ENCODE measurements at regions of chr6 and their contacts with region 1.

Region 1: DNA sequence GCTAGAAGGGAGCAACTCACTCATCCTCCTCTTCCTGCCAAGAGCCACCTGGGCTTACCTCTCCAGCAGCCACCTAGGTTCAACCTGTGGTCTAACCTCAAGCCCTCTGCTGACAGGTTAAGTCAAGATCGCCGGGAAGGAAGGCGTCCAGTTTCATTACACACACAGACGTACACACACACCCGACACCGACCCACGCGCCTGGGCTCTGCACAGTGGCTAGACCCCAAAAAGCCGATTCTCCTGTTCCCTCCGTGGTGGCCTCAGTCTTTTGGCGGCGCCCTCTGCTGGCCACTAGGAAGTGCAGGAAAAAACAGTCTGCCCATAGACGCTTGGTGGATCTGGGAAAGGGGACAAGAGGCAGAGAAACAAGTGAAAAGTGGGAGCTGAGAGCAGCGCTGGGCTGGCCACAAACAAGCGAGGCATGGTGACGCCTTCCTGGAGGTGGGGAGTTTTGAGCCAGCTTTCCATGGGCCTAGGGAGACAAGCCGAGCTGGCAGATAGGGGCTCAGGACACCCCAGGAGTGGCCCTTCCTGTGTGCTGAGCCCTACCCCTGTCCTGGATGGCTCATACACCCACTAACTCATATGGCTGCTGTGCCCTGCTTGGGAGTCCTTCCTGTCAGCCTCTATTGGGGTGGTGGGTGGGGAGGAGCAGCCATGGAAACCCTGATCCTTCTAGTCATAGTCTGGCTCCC is 52.7 kb downstream of the MRPL14 start:
- DNase-seq: peak; percentile 64
- ATAC-seq: peak; percentile 51
- H3K4me3 Mint-ChIP-seq: peak overlapping the region; percentile 77
- H3K27ac Mint-ChIP-seq: peak overlapping the region; percentile 31; the same call in 1 of the 2 replicates
- H3K4me1 Mint-ChIP-seq: peaks cover 45% of the 10 kb centered on the region
- H3K27me3 Mint-ChIP-seq: no peaks in the 10 kb centered on the region; the same call in 1 of the 2 replicates
- CTCF ChIP-seq: peak; percentile 85; the same call in 1 of the 2 replicates

Region 2: DNA sequence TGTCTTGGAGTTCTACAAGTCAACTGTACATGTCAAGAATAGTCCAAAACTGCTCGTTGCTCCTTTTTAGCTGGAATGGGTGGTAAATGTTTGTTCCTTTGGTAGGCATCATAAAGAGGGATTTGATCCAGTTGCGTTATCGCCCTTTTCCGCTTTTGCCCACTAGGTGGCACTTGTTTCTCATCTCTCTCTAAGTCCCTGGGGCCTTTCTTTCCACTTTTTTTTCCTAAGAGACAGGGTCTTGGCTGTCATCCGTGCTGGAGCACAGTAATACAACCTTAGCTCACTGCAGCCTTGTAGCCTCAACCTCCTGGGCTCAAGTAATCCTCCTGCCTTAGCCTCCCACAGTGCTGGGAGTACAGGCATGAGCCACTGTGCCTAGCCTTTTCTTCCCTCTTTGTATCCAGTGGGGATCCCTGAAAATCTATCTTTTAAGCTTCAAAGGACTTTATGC is 466.3 kb before region 1 on chr6:
- CTCF ChIA-PET with region 1: interaction called, 12 read pairs
- POLR2A ChIA-PET with region 1: no interaction called
- DNase-seq: peak; percentile 79
- ATAC-seq: peak; percentile 84
- H3K4me3 Mint-ChIP-seq: no peak overlapping the region
- H3K27ac Mint-ChIP-seq: peak overlapping the region; percentile 48; the same call in 1 of the 2 replicates
- H3K4me1 Mint-ChIP-seq: no peaks in the 10 kb centered on the region
- H3K27me3 Mint-ChIP-seq: no peaks in the 10 kb centered on the region
- CTCF ChIP-seq: peak; percentile 76

Region 3: GRCh38 chr6:43758617-43759050 is 316.0 kb before region 1 on chr6:
- CTCF ChIA-PET with region 1: interaction called, 11 read pairs
- POLR2A ChIA-PET with region 1: no interaction called
- DNase-seq: peak; percentile 90
- ATAC-seq: peak; percentile 97
- H3K4me3 Mint-ChIP-seq: no peak overlapping the region
- H3K27ac Mint-ChIP-seq: no peak overlapping the region
- H3K4me1 Mint-ChIP-seq: peaks cover 21% of the 10 kb centered on the region
- H3K27me3 Mint-ChIP-seq: no peaks in the 10 kb centered on the region; the same call in 1 of the 2 replicates
- CTCF ChIP-seq: peak; percentile 63

Region 4: DNA sequence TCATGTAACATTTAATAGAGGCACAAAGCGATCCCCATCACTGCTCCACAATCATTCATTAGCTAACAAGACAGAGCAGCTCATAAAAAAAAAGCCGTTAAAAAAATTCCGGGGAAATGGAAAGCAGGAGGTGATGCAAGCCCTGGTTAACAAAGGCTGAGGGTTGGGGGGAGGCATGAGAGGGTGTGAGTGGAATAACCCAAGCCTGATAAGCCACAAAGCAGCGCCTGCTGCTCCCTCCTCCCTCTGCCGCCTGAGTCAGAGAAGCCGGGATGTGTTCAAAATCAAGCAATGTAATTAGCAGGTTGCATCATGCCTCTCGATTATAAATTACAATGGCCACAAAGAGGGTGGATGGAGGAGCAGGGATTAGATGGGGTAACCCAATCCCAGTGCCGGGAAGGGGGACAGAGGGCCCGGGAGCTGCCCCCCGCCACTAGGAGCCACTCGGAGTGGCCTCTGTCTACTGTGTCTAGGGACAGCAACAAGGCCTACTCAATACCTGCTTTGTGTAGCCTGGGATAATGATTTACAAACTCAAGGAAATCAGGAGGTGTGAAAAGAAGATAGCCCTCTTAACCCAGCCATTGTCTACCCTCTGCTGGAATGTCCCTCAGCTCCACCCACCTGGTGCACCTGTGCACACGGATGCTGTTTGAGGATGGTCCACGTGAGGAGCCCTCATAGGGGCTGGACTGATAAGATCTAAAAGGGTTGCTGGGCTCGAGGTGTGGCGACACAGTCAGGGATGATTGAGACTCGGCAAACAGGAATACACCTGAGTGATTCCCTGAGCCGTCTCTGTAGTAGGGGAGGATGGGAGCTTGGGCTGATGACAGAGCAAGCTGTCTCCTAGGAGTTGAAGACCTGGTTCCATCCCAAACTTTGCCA is 147.7 kb before region 1 on chr6:
- CTCF ChIA-PET with region 1: interaction called, 14 read pairs
- POLR2A ChIA-PET with region 1: no interaction called
- DNase-seq: peak; percentile 77
- ATAC-seq: peak; percentile 68
- H3K4me3 Mint-ChIP-seq: no peak overlapping the region
- H3K27ac Mint-ChIP-seq: peak overlapping the region; percentile 68; the same call in 1 of the 2 replicates
- H3K4me1 Mint-ChIP-seq: peaks cover 15% of the 10 kb centered on the region
- H3K27me3 Mint-ChIP-seq: no peaks in the 10 kb centered on the region
- CTCF ChIP-seq: no peak

Region 5: GRCh38 chr6:44010411-44011349 is 63.9 kb before region 1 on chr6:
- CTCF ChIA-PET with region 1: interaction called, 58 read pairs
- POLR2A ChIA-PET with region 1: interaction called, 3 read pairs
- DNase-seq: no peak
- ATAC-seq: no peak
- H3K4me3 Mint-ChIP-seq: no peak overlapping the region
- H3K27ac Mint-ChIP-seq: no peak overlapping the region
- H3K4me1 Mint-ChIP-seq: peaks cover 27% of the 10 kb centered on the region
- H3K27me3 Mint-ChIP-seq: peaks cover 5% of the 10 kb centered on the region
- CTCF ChIP-seq: no peak

Region 6: GRCh38 chr6:44058617-44059358 is 15.8 kb before region 1 on chr6:
- CTCF ChIA-PET with region 1: interaction called, 96 read pairs
- POLR2A ChIA-PET with region 1: interaction called, 5 read pairs
- DNase-seq: no peak
- ATAC-seq: no peak
- H3K4me3 Mint-ChIP-seq: no peak overlapping the region
- H3K27ac Mint-ChIP-seq: no peak overlapping the region; the same call in 1 of the 2 replicates
- H3K4me1 Mint-ChIP-seq: peaks cover 12% of the 10 kb centered on the region
- H3K27me3 Mint-ChIP-seq: no peaks in the 10 kb centered on the region; the same call in 1 of the 2 replicates
- CTCF ChIP-seq: no peak

Measured in WTC11 (cell line).